ENCODE measurements at regions of chr14 and their contacts with region 1.

Region 1: DNA sequence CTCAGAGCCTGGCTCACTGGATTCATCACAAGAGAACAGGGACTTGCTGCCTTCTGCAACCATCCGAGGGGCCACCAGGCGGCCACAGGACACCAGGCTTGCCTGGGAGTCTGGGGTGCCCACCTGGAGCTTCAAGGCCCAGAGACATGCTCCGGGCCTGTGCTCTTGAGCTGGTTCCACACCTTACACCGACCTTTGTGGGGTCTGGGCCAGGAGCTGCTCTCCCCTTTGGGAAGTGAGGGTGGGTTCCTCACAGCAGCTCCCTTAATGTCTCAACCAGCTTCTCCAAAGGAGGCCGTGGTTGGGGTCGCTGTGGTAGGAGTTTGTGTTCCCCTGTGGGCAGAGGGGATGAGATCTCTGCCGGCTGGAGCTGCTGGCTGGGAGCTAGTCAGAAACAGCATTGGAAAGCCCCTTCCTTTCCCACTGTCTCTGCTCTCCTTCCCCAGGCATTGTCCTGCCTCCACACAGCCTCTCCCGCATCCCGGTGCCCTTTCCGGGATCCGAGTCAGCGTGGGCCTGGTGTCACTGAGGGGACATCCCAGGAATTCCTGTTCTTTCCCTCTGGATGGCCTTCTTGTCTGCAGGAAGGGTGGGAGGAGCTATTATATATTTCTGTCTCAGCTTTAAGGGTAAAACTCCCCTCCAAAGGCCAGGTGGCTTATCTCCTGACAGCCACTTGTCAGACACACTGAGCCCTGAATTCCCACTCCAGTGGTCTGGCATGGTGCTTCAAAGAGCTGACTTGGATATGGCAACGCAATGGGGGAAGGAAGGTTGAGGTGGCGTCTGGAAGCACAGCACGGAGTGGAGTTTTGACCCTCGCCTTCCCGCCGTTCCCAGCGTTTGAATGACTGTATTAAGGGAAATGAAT is 5.1 kb upstream of the PAPLN start:
- DNase-seq: peak in 1 of 5 donors; percentile 35
- H3K4me3 ChIP-seq: no peak overlapping the region
- H3K27ac ChIP-seq: no peak overlapping the region
- H3K4me1 ChIP-seq: peaks cover 27% of the 10 kb centered on the region
- H3K27me3 ChIP-seq: no peaks in the 10 kb centered on the region
- CTCF ChIP-seq: no peak
- EP300 ChIP-seq: no peak
- POLR2A ChIP-seq: no peak

Region 2: GRCh38 chr14:72830786-72831594 is 401.2 kb before region 1 on chr14:
- intact Hi-C with region 1: no loop called
- DNase-seq: peak; percentile 70 to 78 (median 75)
- H3K4me3 ChIP-seq: no peak overlapping the region
- H3K27ac ChIP-seq: peak overlapping the region in 1 of 2 donors; percentile 80
- H3K4me1 ChIP-seq: peaks cover 18% of the 10 kb centered on the region
- H3K27me3 ChIP-seq: no peaks in the 10 kb centered on the region
- CTCF ChIP-seq: no peak
- EP300 ChIP-seq: no peak
- POLR2A ChIP-seq: no peak

Region 3: DNA sequence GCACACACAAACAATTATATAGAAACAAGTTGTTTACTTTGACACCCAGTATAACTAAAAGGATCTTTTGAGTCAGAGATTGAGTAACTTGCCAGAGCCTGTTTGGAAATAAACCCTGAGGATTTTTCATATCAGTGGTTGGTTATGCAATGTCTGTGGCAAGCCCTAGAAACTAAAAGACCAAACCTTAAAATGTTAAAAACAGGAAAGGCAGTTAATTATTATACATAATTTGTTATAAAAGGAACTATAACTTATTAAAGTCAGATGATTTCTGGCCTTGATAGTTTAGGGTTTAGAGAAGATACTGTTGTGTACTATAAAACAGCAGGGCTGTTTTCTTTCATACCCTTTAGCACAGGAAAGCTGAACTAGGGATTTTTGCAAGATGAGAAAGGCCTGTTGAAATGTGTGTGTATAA is 51.8 kb before region 1 on chr14:
- intact Hi-C with region 1: loop called in 1 of 4 experiments (anchors 10 kb)
- DNase-seq: no peak
- H3K4me3 ChIP-seq: no peak overlapping the region
- H3K27ac ChIP-seq: peak overlapping the region in 1 of 2 donors; percentile 52
- H3K4me1 ChIP-seq: peaks cover 3% of the 10 kb centered on the region
- H3K27me3 ChIP-seq: no peaks in the 10 kb centered on the region
- CTCF ChIP-seq: no peak
- EP300 ChIP-seq: no peak
- POLR2A ChIP-seq: no peak